Lower leg skin (tissue), 4 donors: ENCODE measurements at regions of chr5 and their contacts with region 1.

Region 1: DNA sequence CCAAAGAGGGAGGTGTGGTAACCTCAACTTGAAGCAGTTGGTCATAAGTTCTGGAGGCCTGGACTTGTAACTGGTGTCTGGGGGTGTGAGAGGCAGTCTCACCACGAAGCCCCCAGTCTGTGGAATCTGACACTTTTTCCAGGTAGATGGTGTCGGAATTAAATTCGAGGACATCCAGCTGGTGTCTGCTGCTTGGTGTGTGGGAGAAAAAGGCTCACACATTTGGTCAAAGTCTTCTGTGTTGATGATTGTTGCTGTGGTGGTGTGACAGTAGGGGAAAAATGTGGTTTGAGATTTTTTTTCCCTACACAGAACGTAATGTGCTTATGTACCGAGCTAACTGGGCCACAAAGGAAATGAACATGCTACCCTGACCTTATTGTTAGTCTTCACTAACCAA is 251.9 kb downstream of the MAT2B start:
- DNase-seq: no peak
- H3K4me3 ChIP-seq: no peak overlapping the region
- CTCF ChIP-seq: no peak
- POLR2A ChIP-seq: no peak

Region 2: GRCh38 chr5:163809473-163809872 is 52.1 kb after region 1 on chr5:
- intact Hi-C with region 1: loop called (anchors 2 kb)
- DNase-seq: no peak
- H3K4me3 ChIP-seq: no peak overlapping the region
- CTCF ChIP-seq: no peak
- POLR2A ChIP-seq: no peak

Region 3: GRCh38 chr5:163821142-163821541 is 63.8 kb after region 1 on chr5:
- intact Hi-C with region 1: no loop called
- DNase-seq: no peak
- H3K4me3 ChIP-seq: no peak overlapping the region
- CTCF ChIP-seq: no peak
- POLR2A ChIP-seq: no peak